AG04449 (cell line): ENCODE measurements at regions of chr2 and their contacts with region 1.

Region 1: GRCh38 chr2:70301344-70302194 is at the start of gene FAM136A:
- DNase-seq: no peak
- H3K4me3 ChIP-seq: peak within 1 kb of the TSS; percentile 88
- CTCF ChIP-seq: peak; percentile 97

Region 2: DNA sequence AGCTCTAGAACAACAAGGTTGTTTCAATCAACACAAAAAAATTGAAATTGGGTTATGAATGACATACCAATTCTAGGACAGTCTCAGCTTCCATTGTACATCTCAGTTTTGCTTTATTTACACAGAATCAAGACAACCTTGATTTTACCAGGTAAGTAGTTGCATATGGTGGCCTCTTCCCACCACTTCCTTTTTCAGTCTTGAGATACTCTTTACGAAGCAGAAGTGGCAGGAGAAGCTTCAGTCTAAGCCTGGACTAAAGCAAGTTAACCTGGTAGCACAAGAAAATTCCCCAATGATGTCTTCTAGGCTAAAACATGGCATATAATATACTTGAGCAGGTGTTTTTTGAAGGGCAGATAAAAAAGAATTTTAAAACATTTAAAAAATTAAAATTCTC is 11.0 kb after region 1 on chr2:
- CTCF ChIA-PET with region 1: interaction called, 45 read pairs
- POLR2A ChIA-PET with region 1: no interaction called
- DNase-seq: no peak
- H3K4me3 ChIP-seq: no peak overlapping the region
- CTCF ChIP-seq: no peak

Region 3: DNA sequence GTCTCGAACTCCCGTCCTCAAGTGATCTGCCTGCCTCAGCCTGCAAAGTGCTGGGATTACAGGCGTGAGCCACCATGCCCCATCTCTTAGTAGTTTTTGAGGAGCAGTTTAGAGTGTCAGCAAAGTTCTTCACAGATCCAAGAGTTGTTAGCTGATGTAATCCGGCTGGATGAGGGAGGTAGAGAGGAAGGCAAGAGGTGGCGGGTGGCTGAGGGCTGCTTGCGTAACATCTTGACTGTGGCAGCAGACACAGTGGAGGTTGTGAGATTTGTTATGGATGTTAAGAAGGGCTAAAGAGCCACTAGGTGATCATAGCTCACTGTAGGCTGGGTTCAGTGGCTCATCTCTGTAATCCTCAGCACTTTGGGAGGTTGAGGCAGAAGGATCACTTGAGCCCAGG is 19.8 kb after region 1 on chr2:
- CTCF ChIA-PET with region 1: interaction called, 45 read pairs
- POLR2A ChIA-PET with region 1: no interaction called
- DNase-seq: no peak
- H3K4me3 ChIP-seq: no peak overlapping the region
- CTCF ChIP-seq: no peak

Region 4: DNA sequence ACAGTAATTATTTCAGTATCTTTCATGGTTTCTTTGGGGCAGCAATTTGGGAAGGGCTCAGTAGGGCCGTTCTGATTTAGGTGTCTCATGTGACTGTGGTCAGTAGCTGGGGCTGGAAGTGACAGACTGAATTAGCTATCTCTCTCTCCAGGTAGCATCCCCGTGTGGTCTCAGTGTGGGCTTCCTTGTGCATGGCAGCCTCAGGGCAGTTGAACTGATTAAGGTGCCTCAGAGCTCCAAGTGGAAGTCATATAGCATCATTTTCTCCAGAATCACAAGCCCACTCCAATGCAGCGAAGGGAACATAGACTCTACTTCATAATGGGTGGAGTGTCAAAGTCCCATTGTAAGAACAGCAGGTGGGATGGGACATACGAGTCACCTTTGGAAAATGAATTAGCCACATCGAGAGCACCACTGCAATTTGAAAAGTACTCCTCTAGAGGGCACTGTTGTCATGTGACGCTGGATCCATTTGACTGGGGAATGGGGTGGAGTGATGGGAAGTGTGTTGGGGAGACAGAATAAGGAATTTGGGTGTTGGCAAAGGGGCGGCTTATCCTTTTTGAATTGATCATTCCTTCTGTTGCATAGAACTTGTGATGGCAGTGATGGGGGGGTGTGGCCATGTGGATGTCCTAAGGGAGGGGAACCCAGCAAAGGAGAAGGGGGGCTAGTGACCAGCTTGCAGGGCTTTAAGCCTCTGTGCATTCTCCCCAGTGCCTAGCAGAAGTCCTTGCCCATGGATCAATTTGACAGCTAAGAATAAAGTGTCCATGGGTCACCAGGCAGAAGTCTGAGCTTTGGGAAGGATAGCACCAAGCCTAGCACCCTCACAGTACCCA is 39.6 kb after region 1 on chr2:
- CTCF ChIA-PET with region 1: interaction called, 11 read pairs
- POLR2A ChIA-PET with region 1: no interaction called
- DNase-seq: no peak
- H3K4me3 ChIP-seq: no peak overlapping the region
- CTCF ChIP-seq: peak; percentile 72

Region 5: GRCh38 chr2:70616168-70616694 is 314.7 kb after region 1 on chr2:
- CTCF ChIA-PET with region 1: interaction called, 292 read pairs
- POLR2A ChIA-PET with region 1: no interaction called
- DNase-seq: no peak
- H3K4me3 ChIP-seq: no peak overlapping the region
- CTCF ChIP-seq: no peak

Region 6: GRCh38 chr2:70641263-70641784 is 339.8 kb after region 1 on chr2:
- CTCF ChIA-PET with region 1: interaction called, 185 read pairs
- POLR2A ChIA-PET with region 1: no interaction called
- DNase-seq: no peak
- H3K4me3 ChIP-seq: no peak overlapping the region
- CTCF ChIP-seq: no peak

Region 7: DNA sequence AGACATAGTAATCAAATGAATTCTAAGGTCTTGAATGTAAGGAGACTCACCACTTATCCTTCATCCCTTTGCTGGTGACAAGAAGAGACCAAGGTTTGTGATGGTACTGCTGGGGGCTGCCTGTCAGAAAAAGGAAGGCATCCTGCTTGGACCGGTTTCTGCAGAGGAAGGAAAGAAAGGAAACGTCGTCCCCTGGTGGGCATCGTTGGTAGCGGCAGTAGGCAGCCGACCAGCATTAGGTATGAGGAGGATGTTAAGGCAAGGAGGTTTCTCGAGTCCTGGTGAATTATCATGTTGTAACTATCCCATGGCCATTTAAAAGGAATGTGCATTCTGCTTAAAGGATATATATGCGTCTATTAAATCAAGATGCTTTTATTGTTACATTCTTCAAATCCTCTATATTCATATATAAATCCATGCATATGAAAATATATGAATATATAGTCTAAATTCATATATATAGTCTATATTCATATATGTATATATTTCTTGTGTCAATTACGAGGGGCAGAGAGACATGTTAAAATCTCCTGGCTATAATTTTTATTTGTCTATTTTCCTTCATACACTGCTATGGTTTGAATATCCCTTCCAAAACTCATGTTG is 346.4 kb after region 1 on chr2:
- CTCF ChIA-PET with region 1: interaction called, 185 read pairs
- POLR2A ChIA-PET with region 1: no interaction called
- DNase-seq: no peak
- H3K4me3 ChIP-seq: no peak overlapping the region
- CTCF ChIP-seq: peak; percentile 97